K562 (cell line): ENCODE measurements at regions of chr1 and their contacts with region 1.

Region 1: GRCh38 chr1:119743781-119744597 is 24.7 kb downstream of the HMGCS2 start:
- DNase-seq: peak; percentile 82 to 90 (median 86)
- ATAC-seq: peak; percentile 90
- H3K4me3 ChIP-seq: no peak overlapping the region
- H3K27ac ChIP-seq: no peak overlapping the region
- H3K4me1 ChIP-seq: peaks cover 0 to 3% of the 10 kb centered on the region in 2 experiments; a peak in 3 of 5 replicates
- H3K27me3 ChIP-seq: peaks cover 12 to 21% of the 10 kb centered on the region in 2 experiments; a peak in 4 of 5 replicates
- CTCF ChIP-seq: peak; percentile 87 to 96 (median 92)
- EP300 ChIP-seq: no peak
- POLR2A ChIP-seq: no peak
- RAD21 ChIP-seq: peak; percentile 68 to 72

Region 2: DNA sequence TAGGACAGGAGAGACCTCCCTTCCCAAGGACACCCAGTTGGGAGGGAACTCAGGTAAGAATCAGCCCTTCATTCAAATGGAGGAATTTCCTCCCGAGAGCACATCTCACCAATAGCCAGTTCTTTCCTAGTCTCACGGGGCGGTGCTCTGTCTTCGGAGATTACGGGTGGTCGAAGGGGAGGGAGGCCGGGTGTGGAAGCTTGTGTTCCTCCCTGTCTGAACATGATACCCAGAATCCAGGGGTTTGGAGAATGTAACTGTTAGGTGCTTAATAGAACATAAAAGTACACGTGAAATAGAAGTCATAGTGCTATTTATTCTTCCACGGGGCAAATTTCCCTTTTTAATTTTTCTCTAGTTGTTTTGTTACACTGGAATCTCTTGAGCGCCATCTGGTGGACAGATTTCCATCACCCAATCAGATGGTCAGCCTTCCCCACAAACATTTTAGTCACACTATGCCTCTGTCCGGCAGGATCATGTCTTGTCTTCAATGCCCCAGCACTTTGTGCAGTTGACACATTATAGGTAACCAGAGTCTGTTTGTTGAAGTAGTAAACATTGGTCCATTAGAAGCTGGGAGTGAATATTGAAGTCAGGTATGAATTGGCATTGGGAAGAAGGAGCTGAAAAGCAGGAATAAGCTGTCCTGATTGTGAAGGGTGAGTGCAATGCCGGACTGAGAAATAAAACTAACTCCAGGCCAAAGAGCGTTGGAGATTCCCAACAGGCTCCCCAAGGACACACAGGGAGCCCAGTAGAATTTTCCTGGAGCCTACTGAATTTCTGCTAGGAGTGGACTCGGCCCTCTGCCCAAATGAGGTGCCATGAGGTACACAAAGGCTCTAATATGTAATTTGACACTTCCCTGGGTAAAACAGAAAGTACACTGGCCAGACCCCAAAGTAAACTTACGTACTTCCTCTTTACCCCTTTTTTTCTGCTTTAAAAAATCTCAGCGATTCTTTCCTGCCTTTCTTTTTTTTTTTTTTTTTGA is 68.3 kb before region 1 on chr1:
- CTCF ChIA-PET with region 1: no interaction called
- POLR2A ChIA-PET with region 1: no interaction called
- in situ Hi-C with region 1: no loop called
- intact Hi-C with region 1: loop called (anchors 5 kb)
- DNase-seq: peak; percentile 85 to 91 (median 86)
- ATAC-seq: peak; percentile 92
- H3K4me3 ChIP-seq: peak overlapping the region; percentile 28
- H3K27ac ChIP-seq: no peak overlapping the region
- H3K4me1 ChIP-seq: peaks cover 0 to 18% of the 10 kb centered on the region in 2 experiments; a peak in 3 of 5 replicates
- H3K27me3 ChIP-seq: no peaks in the 10 kb centered on the region
- CTCF ChIP-seq: peak; percentile 80 to 96 (median 90)
- EP300 ChIP-seq: no peak
- POLR2A ChIP-seq: no peak
- RAD21 ChIP-seq: peak; percentile 75 to 88

Region 3: GRCh38 chr1:119795261-119796200 is 51.5 kb after region 1 on chr1:
- CTCF ChIA-PET with region 1: no interaction called
- POLR2A ChIA-PET with region 1: no interaction called
- in situ Hi-C with region 1: no loop called
- intact Hi-C with region 1: loop called (anchors 5 kb)
- DNase-seq: no peak
- ATAC-seq: no peak
- H3K4me3 ChIP-seq: no peak overlapping the region
- H3K27ac ChIP-seq: no peak overlapping the region
- H3K4me1 ChIP-seq: no peaks in the 10 kb centered on the region
- H3K27me3 ChIP-seq: peaks cover 41 to 52% of the 10 kb centered on the region in 2 experiments
- CTCF ChIP-seq: no peak
- EP300 ChIP-seq: no peak
- POLR2A ChIP-seq: no peak
- RAD21 ChIP-seq: no peak